CD4-positive, alpha-beta T cell (primary cell): ENCODE measurements at regions of chr2 and their contacts with region 1.

Region 1: DNA sequence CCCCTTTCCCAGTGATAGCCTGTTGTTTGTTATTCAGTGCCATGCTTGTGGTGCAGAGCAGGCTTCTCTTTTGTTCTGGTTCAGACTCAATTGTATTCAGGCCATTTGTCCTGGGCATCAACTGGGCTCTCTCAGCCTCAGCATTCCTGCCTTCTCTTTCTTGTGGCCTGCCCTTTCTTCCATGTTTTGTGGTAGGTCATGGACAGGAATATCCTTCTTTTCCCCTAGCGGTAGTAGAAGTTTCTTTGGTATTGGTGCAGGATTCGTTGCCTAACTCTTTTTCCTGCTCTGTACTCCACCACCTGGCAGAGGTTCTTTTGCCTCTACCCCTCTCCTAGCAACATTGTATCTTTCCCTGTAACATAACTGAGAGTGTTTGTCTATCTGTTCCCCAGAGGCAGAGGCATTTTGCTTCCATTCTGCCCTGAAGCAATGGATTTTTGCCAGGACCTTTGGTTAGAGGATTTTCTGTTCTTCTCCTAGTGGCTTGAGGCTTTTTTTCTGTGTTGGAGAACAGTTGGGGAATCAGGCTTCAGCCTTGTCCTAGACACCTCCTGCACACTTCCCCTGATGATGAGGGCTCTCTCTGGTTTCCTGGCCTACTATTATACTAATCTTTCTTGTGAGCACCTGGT is 68.5 kb downstream of the NCOA1 start:
- DNase-seq: no peak
- ATAC-seq: no peak
- H3K4me3 ChIP-seq: no peak overlapping the region
- H3K4me3 Mint-ChIP-seq: no peak overlapping the region
- H3K27ac ChIP-seq: no peak overlapping the region
- H3K27ac Mint-ChIP-seq: no peak overlapping the region
- H3K4me1 ChIP-seq: no peaks in the 10 kb centered on the region
- H3K4me1 Mint-ChIP-seq: peaks cover 60% of the 10 kb centered on the region
- H3K27me3 ChIP-seq: no peaks in the 10 kb centered on the region
- H3K27me3 Mint-ChIP-seq: no peaks in the 10 kb centered on the region
- CTCF ChIP-seq: no peak

Region 2: GRCh38 chr2:23967846-23968245 is 591.7 kb before region 1 on chr2:
- CTCF ChIA-PET with region 1: no interaction called
- POLR2A ChIA-PET with region 1: no interaction called
- intact Hi-C with region 1: no loop called
- DNase-seq: no peak
- ATAC-seq: no peak
- H3K4me3 ChIP-seq: no peak overlapping the region
- H3K4me3 Mint-ChIP-seq: no peak overlapping the region
- H3K27ac ChIP-seq: no peak overlapping the region
- H3K27ac Mint-ChIP-seq: no peak overlapping the region
- H3K4me1 ChIP-seq: no peaks in the 10 kb centered on the region
- H3K4me1 Mint-ChIP-seq: no peaks in the 10 kb centered on the region
- H3K27me3 ChIP-seq: no peaks in the 10 kb centered on the region
- H3K27me3 Mint-ChIP-seq: no peaks in the 10 kb centered on the region
- CTCF ChIP-seq: no peak

Region 3: DNA sequence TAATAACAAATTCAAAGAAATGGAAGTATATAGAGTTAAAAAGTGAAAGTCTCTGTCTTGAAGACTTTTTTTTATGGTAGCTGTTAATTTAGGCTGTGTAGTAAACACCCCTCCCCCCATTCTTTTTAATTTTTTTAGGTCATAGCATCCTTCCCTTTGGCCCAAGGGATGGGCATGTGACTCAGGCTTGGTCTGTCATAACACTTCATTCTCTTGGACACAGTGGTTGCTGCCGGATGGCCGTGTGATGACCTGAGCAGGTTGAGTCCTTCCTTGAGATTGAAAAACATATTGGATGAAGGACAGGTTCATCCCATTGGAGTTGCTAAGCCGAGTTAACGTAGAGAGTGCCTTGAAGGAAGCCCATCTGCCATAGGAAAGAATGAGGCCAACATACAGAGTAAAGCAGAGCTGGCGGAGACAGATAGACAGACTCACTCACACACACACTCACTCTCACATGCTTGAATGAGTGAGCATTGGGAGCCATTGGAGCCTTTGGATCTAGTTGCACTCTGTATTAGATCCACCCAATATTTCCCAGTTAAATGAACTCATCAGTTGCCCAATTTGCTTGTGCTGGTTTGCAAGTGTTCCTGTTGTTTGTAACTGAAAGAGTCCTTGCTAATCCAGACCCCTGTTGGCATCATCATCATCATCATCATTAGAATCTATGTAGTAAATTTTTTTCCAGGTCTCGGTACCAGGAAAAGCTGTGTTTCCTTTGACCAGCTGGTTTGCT is 53.9 kb before region 1 on chr2:
- CTCF ChIA-PET with region 1: no interaction called
- POLR2A ChIA-PET with region 1: no interaction called
- intact Hi-C with region 1: no loop called
- DNase-seq: no peak
- ATAC-seq: no peak
- H3K4me3 ChIP-seq: no peak overlapping the region
- H3K4me3 Mint-ChIP-seq: no peak overlapping the region
- H3K27ac ChIP-seq: no peak overlapping the region
- H3K27ac Mint-ChIP-seq: no peak overlapping the region
- H3K4me1 ChIP-seq: peaks cover 10% of the 10 kb centered on the region
- H3K4me1 Mint-ChIP-seq: peaks cover 76% of the 10 kb centered on the region
- H3K27me3 ChIP-seq: no peaks in the 10 kb centered on the region
- H3K27me3 Mint-ChIP-seq: no peaks in the 10 kb centered on the region
- CTCF ChIP-seq: no peak

Region 4: GRCh38 chr2:24515831-24516230 is 43.8 kb before region 1 on chr2:
- CTCF ChIA-PET with region 1: no interaction called
- POLR2A ChIA-PET with region 1: no interaction called
- intact Hi-C with region 1: loop called in 1 of 2 experiments (anchors 5 kb)
- DNase-seq: peak in 1 of 14 experiments; percentile 9
- ATAC-seq: no peak
- H3K4me3 ChIP-seq: no peak overlapping the region
- H3K4me3 Mint-ChIP-seq: no peak overlapping the region
- H3K27ac ChIP-seq: no peak overlapping the region
- H3K27ac Mint-ChIP-seq: no peak overlapping the region
- H3K4me1 ChIP-seq: no peaks in the 10 kb centered on the region
- H3K4me1 Mint-ChIP-seq: peaks cover 65% of the 10 kb centered on the region
- H3K27me3 ChIP-seq: no peaks in the 10 kb centered on the region
- H3K27me3 Mint-ChIP-seq: no peaks in the 10 kb centered on the region
- CTCF ChIP-seq: no peak